Psoas muscle (tissue), 8 donors: ENCODE measurements at regions of chr7 and their contacts with region 1.

Region 1: GRCh38 chr7:22488643-22489462 is 11.1 kb downstream of the STEAP1B start:
- DNase-seq: peak; percentile 55 to 65
- ATAC-seq: peak; percentile 76 to 93 (median 82)
- H3K4me3 ChIP-seq: no peak overlapping the region
- H3K27ac ChIP-seq: no peak overlapping the region
- H3K4me1 ChIP-seq: no peaks in the 10 kb centered on the region
- H3K27me3 ChIP-seq: no peaks in the 10 kb centered on the region
- CTCF ChIP-seq: peak; percentile 97

Region 2: GRCh38 chr7:22103255-22103969 is 385.4 kb before region 1 on chr7:
- intact Hi-C with region 1: loop called in 1 of 2 experiments (anchors 2 kb)
- DNase-seq: peak in 1 of 2 donors; percentile 44
- ATAC-seq: peak; percentile 53 to 82 (median 60)
- H3K4me3 ChIP-seq: no peak overlapping the region
- H3K27ac ChIP-seq: no peak overlapping the region
- H3K4me1 ChIP-seq: no peaks in the 10 kb centered on the region
- H3K27me3 ChIP-seq: no peaks in the 10 kb centered on the region
- CTCF ChIP-seq: peak; percentile 74

Region 3: GRCh38 chr7:22110227-22110839 is 378.5 kb before region 1 on chr7:
- intact Hi-C with region 1: loop called (anchors 1 to 2 kb)
- DNase-seq: peak in 1 of 2 donors; percentile 55
- ATAC-seq: peak; percentile 69 to 95 (median 80)
- H3K4me3 ChIP-seq: no peak overlapping the region
- H3K27ac ChIP-seq: no peak overlapping the region
- H3K4me1 ChIP-seq: no peaks in the 10 kb centered on the region
- H3K27me3 ChIP-seq: peaks cover 0 to 4% (median 0%) of the 10 kb centered on the region in 3 donors
- CTCF ChIP-seq: peak; percentile 87